Right ventricle myocardium inferior (tissue), 1 donor: ENCODE measurements at regions of chr1 and their contacts with region 1.

Region 1: GRCh38 chr1:86470859-86471258 is 2.1 kb downstream of the CLCA1 start:
- DNase-seq: no peak
- ATAC-seq: no peak

Region 2: GRCh38 chr1:86409416-86410021 is 61.3 kb before region 1 on chr1:
- intact Hi-C with region 1: no loop called
- DNase-seq: no peak
- ATAC-seq: no peak

Region 3: GRCh38 chr1:86687595-86687994 is 216.7 kb after region 1 on chr1:
- intact Hi-C with region 1: loop called (anchors 10 kb)
- DNase-seq: no peak
- ATAC-seq: no peak

Region 4: DNA sequence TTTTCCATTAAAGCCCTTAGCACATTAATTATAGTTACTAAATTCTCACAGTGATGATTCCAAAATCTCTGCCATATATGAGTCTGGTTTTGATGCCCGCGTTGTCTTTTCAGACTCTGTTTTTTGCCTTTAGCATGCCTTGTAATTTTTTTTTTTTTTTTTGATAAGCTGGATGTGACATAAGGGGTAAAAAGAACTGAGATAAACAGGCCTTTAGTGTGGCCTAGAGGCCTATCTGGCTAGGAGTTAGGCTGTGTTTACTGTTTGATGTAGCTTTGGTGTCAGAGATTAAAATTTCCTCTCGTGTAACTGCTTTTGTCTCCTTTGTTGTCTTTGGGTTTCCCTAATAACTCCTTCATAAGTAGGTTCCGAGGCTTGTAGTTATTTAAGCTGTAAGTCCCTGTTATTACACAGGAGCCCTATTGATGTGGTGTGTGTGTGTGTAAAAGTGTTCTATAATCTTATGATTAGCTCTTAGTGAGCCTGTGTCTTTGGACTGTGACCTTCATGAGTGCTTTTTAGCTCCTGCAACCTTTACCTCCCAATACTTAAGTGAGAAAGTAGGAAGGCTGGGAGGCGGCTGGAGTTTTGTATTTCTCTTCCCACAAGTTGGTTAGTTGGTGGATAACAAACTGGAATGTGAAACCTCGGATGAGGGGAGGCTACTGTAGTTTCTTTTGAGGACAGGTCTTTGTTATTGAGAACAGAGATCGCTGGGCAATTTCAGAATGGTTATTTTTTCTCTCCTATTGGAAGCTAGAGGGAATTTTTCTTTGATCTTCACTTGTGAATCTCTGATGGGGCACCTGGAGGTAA is 462.9 kb after region 1 on chr1:
- intact Hi-C with region 1: no loop called
- DNase-seq: no peak
- ATAC-seq: peak; percentile 50